Right cardiac atrium (tissue), 5 donors: ENCODE measurements at regions of chr1 and their contacts with region 1.

Region 1: GRCh38 chr1:152623203-152623844 is 421 bp upstream of the LCE3A start:
- DNase-seq: no peak
- ATAC-seq: no peak
- H3K4me3 ChIP-seq: no peak overlapping the region
- H3K27ac ChIP-seq: no peak overlapping the region
- H3K4me1 ChIP-seq: no peaks in the 10 kb centered on the region
- H3K27me3 ChIP-seq: no peaks in the 10 kb centered on the region

Region 2: DNA sequence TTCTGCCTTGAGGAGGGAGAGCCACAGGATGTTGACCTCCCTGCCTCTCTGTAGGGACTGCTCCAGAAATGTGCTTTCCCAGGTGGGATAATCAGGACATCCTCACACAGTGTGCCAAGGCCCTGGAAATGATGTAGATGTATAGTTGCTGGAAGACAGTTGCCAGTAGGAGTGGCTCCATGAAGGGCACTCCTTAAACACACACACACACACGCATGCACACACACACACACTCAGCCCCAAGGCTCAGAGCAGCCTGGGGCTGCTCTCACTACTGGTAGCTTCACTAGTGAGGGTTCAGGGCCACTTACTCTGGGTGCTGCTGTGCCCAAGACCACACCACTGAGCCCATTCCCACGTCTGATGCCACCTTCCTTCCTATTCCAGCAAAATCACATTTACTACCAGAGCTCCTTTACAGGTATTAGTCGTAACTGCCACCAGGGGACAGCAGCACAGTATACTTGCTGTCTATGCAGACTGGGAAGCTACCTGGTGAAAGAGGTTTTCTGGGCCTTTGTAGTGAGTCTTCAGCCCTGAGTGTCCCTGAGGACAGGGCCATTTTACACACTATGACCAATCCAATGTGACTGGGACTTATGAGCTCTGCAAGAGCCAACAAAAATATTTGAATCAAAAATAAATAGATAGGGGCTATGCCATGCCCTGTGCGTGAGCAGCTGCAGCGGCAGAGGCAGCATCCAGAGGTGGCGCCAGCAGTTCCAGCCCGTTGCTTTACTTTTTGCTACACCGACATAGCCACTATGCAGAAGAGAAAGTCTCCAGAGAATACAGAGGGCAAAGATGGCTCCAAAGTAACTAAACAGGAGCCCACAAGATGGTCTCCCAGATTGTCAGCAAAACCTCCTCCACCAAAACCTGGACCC is 224.3 kb before region 1 on chr1:
- intact Hi-C with region 1: no loop called
- DNase-seq: no peak
- ATAC-seq: peak in 1 of 2 donors; percentile 46
- H3K4me3 ChIP-seq: no peak overlapping the region
- H3K27ac ChIP-seq: no peak overlapping the region
- H3K4me1 ChIP-seq: no peaks in the 10 kb centered on the region
- H3K27me3 ChIP-seq: no peaks in the 10 kb centered on the region

Region 3: DNA sequence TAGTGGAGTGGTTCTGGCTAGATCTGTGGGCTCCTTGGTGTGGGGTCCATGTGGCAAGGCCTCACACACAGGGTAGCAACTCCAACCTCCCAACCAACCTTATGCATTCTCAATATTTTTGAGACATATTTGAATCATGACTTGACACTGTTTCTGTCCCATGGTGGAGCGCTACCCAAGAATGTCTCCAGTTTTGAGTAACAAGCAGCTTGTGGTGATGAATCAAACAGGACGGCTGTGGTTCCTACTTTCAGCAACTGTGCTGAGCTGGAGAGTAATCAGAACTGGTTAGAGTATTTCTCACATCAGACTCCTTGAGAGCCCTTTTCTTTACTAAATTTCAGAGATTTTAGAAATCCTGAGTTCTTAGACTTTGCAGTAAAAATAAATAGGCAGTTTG is 46.2 kb before region 1 on chr1:
- intact Hi-C with region 1: loop called in 1 of 4 experiments (anchors 10 kb)
- DNase-seq: no peak
- ATAC-seq: no peak
- H3K4me3 ChIP-seq: no peak overlapping the region
- H3K27ac ChIP-seq: no peak overlapping the region
- H3K4me1 ChIP-seq: no peaks in the 10 kb centered on the region
- H3K27me3 ChIP-seq: no peaks in the 10 kb centered on the region